ENCODE measurements at regions of chr4 and their contacts with region 1.

Region 1: GRCh38 chr4:145868637-145869409 is 69.8 kb downstream of the ZNF827 start:
- DNase-seq: peak in 3 of 9 donors; percentile 1 to 10 (median 7)
- ATAC-seq: no peak
- H3K4me3 ChIP-seq: no peak overlapping the region
- H3K4me3 Mint-ChIP-seq: no peak overlapping the region
- H3K27ac ChIP-seq: no peak overlapping the region
- H3K27ac Mint-ChIP-seq: no peak overlapping the region
- H3K4me1 ChIP-seq: no peaks in the 10 kb centered on the region
- H3K4me1 Mint-ChIP-seq: peaks cover 4 to 25% (median 15%) of the 10 kb centered on the region in 7 donors
- H3K27me3 ChIP-seq: no peaks in the 10 kb centered on the region
- H3K27me3 Mint-ChIP-seq: no peaks in the 10 kb centered on the region

Region 2: GRCh38 chr4:145234091-145234706 is 634.6 kb before region 1 on chr4:
- CTCF ChIA-PET with region 1: no interaction called
- POLR2A ChIA-PET with region 1: no interaction called
- intact Hi-C with region 1: loop called in 1 of 2 experiments (anchors 5 kb)
- DNase-seq: peak; percentile 7 to 56 (median 46)
- ATAC-seq: peak; percentile 98
- H3K4me3 ChIP-seq: no peak overlapping the region
- H3K4me3 Mint-ChIP-seq: no peak overlapping the region
- H3K27ac ChIP-seq: no peak overlapping the region
- H3K27ac Mint-ChIP-seq: no peak overlapping the region
- H3K4me1 ChIP-seq: no peaks in the 10 kb centered on the region
- H3K4me1 Mint-ChIP-seq: no peaks in the 10 kb centered on the region
- H3K27me3 ChIP-seq: no peaks in the 10 kb centered on the region
- H3K27me3 Mint-ChIP-seq: peaks cover 0 to 16% (median 0%) of the 10 kb centered on the region in 5 donors

Region 3: GRCh38 chr4:145830699-145831098 is 38.1 kb before region 1 on chr4:
- CTCF ChIA-PET with region 1: no interaction called
- POLR2A ChIA-PET with region 1: no interaction called
- intact Hi-C with region 1: no loop called
- DNase-seq: no peak
- ATAC-seq: peak; percentile 47
- H3K4me3 ChIP-seq: no peak overlapping the region
- H3K4me3 Mint-ChIP-seq: no peak overlapping the region
- H3K27ac ChIP-seq: no peak overlapping the region
- H3K27ac Mint-ChIP-seq: peak overlapping the region in 5 of 9 donors; percentile 4 to 51 (median 37)
- H3K4me1 ChIP-seq: peaks cover 8 to 9% of the 10 kb centered on the region in 2 donors
- H3K4me1 Mint-ChIP-seq: peaks cover 6 to 39% (median 31%) of the 10 kb centered on the region in 7 donors
- H3K27me3 ChIP-seq: no peaks in the 10 kb centered on the region
- H3K27me3 Mint-ChIP-seq: no peaks in the 10 kb centered on the region

Region 4: DNA sequence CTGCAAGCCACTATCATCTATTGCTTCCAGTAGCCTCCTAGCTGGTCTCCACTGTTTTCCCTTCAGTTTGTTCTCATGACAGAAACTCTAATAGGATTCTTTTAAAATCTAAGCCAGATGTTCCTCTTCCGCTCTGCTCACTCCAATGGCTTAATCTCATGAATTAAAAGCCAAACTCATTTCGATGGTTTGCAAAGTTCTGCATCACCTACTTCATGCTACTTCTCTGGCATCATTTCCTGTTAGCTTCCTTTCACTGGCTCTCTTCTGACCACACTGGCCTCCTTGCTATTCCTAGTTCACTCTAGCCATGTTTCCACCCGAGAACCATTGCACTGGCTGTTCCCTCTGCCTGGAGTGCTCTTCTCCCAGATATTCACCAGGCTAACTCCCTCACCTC is 204.7 kb after region 1 on chr4:
- CTCF ChIA-PET with region 1: no interaction called
- POLR2A ChIA-PET with region 1: no interaction called
- intact Hi-C with region 1: no loop called
- DNase-seq: no peak
- ATAC-seq: no peak
- H3K4me3 ChIP-seq: no peak overlapping the region
- H3K4me3 Mint-ChIP-seq: no peak overlapping the region
- H3K27ac ChIP-seq: no peak overlapping the region
- H3K27ac Mint-ChIP-seq: no peak overlapping the region
- H3K4me1 ChIP-seq: no peaks in the 10 kb centered on the region
- H3K4me1 Mint-ChIP-seq: no peaks in the 10 kb centered on the region
- H3K27me3 ChIP-seq: no peaks in the 10 kb centered on the region
- H3K27me3 Mint-ChIP-seq: peaks cover 18 to 22% (median 21%) of the 10 kb centered on the region in 5 donors

Region 5: DNA sequence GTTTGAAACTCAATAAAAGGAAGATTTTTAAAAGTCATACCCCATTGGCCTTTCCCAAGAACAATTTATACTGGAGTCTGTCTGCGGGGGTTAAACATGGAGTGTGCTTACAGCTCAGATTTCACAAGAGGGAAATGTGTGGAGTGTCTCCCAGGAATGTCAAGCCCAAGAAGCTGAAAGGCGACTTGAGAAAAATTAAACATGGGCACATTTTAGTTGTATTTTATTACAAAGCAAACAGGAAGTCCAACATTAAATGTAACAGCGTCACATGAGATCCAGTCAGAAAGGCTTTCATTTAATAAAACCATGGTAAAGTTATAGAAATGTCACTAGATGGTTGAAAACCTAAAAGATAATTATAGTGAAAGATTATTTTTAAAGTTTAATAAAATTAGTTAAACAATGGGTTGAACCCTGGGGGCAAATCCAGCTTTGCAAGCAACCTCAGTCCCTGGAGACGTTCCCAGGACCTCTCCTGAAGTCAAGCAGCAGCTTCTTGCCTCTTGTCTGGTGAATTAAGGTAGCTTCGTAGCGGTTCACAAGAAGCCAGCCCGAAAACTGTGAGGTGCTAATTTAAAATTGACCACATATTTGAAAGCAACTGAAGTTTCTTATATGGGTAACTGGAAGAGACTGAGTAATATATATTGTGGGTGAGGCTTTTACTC is 1443.7 kb after region 1 on chr4:
- CTCF ChIA-PET with region 1: no interaction called
- POLR2A ChIA-PET with region 1: no interaction called
- intact Hi-C with region 1: no loop called
- DNase-seq: no peak
- ATAC-seq: no peak
- H3K4me3 ChIP-seq: no peak overlapping the region
- H3K4me3 Mint-ChIP-seq: no peak overlapping the region
- H3K27ac ChIP-seq: no peak overlapping the region
- H3K27ac Mint-ChIP-seq: no peak overlapping the region
- H3K4me1 ChIP-seq: no peaks in the 10 kb centered on the region
- H3K4me1 Mint-ChIP-seq: no peaks in the 10 kb centered on the region
- H3K27me3 ChIP-seq: no peaks in the 10 kb centered on the region
- H3K27me3 Mint-ChIP-seq: peaks cover 0 to 6% (median 0%) of the 10 kb centered on the region in 5 donors

Measured in naive thymus-derived CD4-positive, alpha-beta T cell (primary cell).